ENCODE measurements at regions of chr20 and their contacts with region 1.

Region 1: GRCh38 chr20:45963059-45964005 is 8.7 kb downstream of the ZNF335 start:
- DNase-seq: no peak
- ATAC-seq: no peak

Region 2: DNA sequence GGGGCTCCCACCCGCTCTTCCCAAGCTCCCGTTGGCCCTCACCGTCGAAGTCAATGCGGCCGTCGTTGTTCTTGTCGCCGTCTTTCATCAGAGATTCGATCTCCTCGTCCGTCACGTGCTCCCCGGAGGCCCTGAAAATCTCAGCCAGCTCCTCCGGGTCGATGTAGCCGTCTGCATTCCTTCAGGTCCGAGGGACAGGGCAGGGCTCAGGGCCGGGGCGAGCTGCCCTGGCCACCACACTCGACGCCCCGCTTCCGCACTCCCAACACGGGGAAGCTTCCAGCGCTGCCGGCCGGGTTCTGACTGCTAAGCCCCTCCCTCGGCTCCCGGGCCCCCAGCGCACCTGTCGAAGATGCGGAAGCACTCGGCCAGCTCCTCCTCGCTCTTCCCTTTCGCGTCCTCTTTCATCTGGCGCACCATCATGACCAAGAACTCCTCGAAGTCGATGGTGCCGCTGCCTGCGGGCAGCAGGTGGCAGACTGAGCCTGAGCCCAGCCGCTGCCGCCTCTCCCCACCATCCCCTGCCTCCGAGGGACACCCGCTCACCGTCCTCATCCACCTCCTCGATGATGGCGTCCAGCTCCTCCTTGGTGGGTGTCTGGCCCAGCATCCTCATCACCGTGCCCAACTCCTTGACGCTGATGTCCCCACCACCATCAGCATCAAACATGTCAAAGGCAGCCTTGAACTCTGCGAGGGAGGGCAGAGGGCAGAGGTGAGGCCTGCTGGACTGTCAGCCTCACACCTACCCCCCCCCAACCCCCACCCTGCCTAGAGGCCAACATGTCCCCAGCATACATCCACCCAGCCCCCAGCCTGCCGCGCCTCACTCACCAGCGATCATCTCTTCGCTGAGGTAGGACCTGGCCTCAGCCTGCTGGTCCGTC is 139.1 kb before region 1 on chr20:
- intact Hi-C with region 1: loop called (anchors 5 to 10 kb)
- DNase-seq: no peak
- ATAC-seq: peak; percentile 60 to 66

Region 3: GRCh38 chr20:45890985-45891983 is 72.0 kb before region 1 on chr20 and contains the starts of genes CTSA and NEURL2:
- intact Hi-C with region 1: loop called in 1 of 2 experiments (anchors 2 kb)
- DNase-seq: peak; percentile 95
- ATAC-seq: peak; percentile 88 to 93
- total RNA-seq, gene CTSA: 107 to 108 TPM
- total RNA-seq, gene NEURL2: 6.0 to 11.1 TPM

Measured in left cardiac atrium (tissue), 4 donors.